Activated CD4-positive, alpha-beta memory T cell treated with anti-CD3 and anti-CD28 coated beads for 36 hours (primary cell): ENCODE measurements at regions of chr1 and their contacts with region 1.

Region 1: DNA sequence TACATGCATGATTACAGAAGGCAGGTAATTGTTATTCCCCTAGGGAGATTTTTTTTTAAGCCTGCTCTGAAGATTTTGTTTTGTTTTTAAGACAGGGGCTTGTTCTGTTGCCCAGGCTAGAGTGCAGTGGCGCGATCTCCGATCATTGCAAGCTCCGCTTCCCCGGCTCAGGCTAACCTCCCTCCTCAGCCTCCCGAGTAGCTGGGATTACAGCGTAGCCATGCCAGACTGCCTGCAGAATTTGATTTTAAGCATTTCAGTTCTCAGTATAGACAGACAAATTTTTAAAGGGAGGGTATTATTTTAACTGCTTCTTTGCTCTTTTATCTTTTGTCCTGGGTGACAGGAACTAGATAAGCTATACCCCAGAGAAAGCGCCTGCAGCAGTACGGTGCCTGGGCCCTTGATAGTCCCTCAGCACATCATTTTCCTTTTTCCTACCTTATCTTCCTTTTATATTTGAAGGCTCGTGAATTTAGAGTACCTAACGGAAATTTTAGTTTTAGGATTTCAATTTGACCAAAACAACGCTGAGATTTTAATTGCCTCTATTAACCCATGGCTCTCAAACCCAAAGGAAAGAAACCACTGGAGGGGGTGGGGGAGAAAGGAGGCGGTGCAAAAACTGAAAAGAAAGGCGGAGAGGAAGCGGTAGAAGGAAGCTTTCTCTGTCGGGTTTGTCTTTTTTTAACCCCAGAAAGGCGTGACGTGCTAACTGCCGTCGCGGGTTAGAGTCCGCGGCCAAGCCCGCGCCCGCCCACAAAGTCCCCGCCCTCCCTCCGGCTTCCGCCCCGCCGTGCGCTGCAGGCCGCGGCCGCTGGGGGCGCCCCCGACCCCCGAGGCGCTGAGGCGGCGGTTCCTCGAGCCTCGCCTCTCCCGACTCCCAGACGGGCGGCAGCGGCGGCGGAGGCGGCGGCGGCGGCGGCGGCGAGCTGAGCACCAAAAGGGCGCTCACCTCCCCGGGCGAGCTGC is at the start of gene EEIG2:
- DNase-seq: peak; percentile 93
- H3K4me3 Mint-ChIP-seq: peak within 1 kb of the TSS; percentile 88
- H3K27ac Mint-ChIP-seq: peak within 1 kb of the TSS; percentile 65
- H3K4me1 Mint-ChIP-seq: peaks cover 36% of the 10 kb centered on the region
- H3K27me3 Mint-ChIP-seq: no peaks in the 10 kb centered on the region
- total RNA-seq, gene EEIG2: 8.4 to 8.7 TPM

Region 2: GRCh38 chr1:107782217-107782845 is 777.2 kb before region 1 on chr1:
- CTCF ChIA-PET with region 1: no interaction called
- POLR2A ChIA-PET with region 1: no interaction called
- intact Hi-C with region 1: loop called (anchors 5 kb)
- DNase-seq: no peak
- H3K4me3 Mint-ChIP-seq: no peak overlapping the region
- H3K27ac Mint-ChIP-seq: no peak overlapping the region
- H3K4me1 Mint-ChIP-seq: peaks cover 24% of the 10 kb centered on the region
- H3K27me3 Mint-ChIP-seq: no peaks in the 10 kb centered on the region

Region 3: DNA sequence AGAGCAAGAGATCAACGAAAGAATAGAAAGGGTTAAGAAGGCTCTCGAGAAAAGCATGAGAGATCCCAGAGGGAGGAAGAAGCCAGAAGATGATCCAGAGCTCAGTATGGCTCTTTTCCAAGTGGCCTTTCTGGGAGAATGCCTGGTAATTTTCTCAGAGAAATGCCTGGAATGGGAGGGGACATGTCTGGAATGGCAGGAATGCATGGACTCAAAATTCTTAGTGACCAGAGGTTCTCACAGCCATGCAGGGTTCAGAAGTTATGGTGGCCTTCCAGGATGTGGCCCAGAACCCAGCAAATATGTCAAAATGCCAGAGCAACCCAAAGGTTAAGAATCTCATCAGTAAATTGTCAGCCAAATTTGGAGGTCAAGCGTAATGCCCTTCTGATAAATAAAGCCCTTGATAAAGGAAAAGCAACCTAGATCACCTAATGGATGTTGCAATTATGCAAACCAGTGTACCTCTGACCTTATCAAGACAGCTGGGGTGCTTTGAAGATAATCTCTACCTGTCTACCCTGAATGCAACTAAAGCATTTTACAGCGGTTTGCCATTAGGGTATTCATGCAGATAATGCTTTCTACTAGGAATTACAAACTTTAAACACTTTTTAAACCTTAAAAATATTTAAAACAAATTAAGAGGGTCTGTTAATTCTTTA is 56.3 kb before region 1 on chr1:
- CTCF ChIA-PET with region 1: interaction called, 172 read pairs
- POLR2A ChIA-PET with region 1: interaction called, 3 read pairs
- intact Hi-C with region 1: loop called (anchors 1 kb)
- DNase-seq: no peak
- H3K4me3 Mint-ChIP-seq: no peak overlapping the region
- H3K27ac Mint-ChIP-seq: no peak overlapping the region
- H3K4me1 Mint-ChIP-seq: peaks cover 1% of the 10 kb centered on the region
- H3K27me3 Mint-ChIP-seq: peaks cover 22% of the 10 kb centered on the region

Region 4: GRCh38 chr1:108533351-108534083 is 26.0 kb before region 1 on chr1:
- CTCF ChIA-PET with region 1: interaction called, 17 read pairs
- POLR2A ChIA-PET with region 1: no interaction called
- intact Hi-C with region 1: no loop called
- DNase-seq: peak; percentile 54
- H3K4me3 Mint-ChIP-seq: no peak overlapping the region
- H3K27ac Mint-ChIP-seq: no peak overlapping the region
- H3K4me1 Mint-ChIP-seq: peaks cover 12% of the 10 kb centered on the region
- H3K27me3 Mint-ChIP-seq: peaks cover 7% of the 10 kb centered on the region

Region 5: DNA sequence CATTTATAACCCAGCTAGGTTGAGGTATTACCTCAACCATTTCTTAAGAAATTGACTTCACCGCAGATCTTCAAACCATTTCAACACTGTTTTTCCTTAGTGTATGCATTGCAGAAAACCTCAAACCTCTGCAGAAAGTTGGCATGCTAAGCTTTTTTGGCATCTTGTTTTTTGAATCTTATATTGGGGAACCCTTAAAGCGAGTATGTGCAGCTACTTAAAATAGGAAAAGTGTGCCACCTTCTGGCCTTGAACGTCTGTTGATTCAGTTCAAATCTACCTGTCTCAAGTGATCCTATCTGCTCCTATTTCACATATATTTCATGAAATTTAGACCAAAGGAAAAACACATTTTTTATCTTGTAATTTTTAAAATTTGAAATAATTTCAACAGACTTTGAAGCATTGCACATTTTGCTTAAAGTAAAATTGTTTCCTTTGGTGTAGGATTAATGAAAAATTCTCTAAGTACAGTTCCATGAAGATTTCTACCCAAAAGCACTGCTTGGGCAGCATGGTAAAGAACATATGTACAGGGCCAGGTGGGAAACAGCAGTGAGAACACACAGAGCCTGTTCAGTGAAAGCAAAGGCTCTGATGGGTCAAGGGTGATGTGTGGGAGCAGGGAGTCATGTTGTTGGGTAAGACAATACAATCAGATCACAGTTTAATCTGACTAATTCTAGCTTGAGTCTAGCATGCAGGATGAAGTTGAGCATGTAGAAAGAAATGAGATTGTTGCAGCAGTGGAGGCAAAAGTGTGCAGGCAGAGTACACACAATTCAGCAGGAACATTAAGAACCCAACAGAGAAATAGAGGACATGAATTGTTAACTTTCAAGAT is 84.2 kb after region 1 on chr1:
- CTCF ChIA-PET with region 1: interaction called, 102 read pairs
- POLR2A ChIA-PET with region 1: interaction called, 13 read pairs
- intact Hi-C with region 1: loop called (anchors 1 kb)
- DNase-seq: peak; percentile 49
- H3K4me3 Mint-ChIP-seq: no peak overlapping the region
- H3K27ac Mint-ChIP-seq: peak overlapping the region; percentile 95
- H3K4me1 Mint-ChIP-seq: peaks cover 61% of the 10 kb centered on the region
- H3K27me3 Mint-ChIP-seq: no peaks in the 10 kb centered on the region

Region 6: GRCh38 chr1:108746372-108747205 is 187.1 kb after region 1 on chr1 and contains the start of gene STXBP3:
- CTCF ChIA-PET with region 1: no interaction called
- POLR2A ChIA-PET with region 1: no interaction called
- intact Hi-C with region 1: loop called (anchors 2 kb)
- DNase-seq: peak; percentile 100
- H3K4me3 Mint-ChIP-seq: peak within 1 kb of the TSS; percentile 95
- H3K27ac Mint-ChIP-seq: peak within 1 kb of the TSS; percentile 97
- H3K4me1 Mint-ChIP-seq: peaks cover 28% of the 10 kb centered on the region
- H3K27me3 Mint-ChIP-seq: no peaks in the 10 kb centered on the region
- total RNA-seq, gene STXBP3: 40.8 to 46.8 TPM